Right ventricle myocardium inferior (tissue), 1 donor: ENCODE measurements at regions of chr7 and their contacts with region 1.

Region 1: GRCh38 chr7:112898432-112899290 is 108.5 kb upstream of the TMEM168 start:
- DNase-seq: no peak
- ATAC-seq: peak; percentile 78

Region 2: DNA sequence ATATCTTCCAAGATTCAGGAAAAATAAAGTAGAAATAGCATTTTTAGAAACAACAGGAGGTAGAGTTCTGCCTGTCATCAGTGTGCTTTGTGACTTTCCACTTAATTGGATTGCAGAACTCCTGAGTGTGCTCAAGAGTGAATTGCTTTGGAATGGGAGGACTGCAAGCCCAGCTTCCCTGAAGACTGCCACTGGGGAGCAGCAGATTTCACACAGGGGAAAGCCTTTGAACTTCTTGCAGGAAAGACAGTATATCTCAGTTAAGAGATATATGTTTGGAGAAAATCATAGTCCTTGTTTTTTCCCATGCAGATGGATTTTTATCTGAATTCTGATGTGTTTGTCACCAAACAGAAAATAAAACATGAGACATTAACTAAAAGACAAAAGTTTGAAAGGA is 232.9 kb before region 1 on chr7:
- intact Hi-C with region 1: loop called (anchors 5 kb)
- DNase-seq: no peak
- ATAC-seq: no peak